ENCODE measurements at regions of chr15 and their contacts with region 1.

Region 1: GRCh38 chr15:31435261-31435911 is 108.8 kb downstream of the KLF13 start:
- DNase-seq: peak; percentile 92
- ATAC-seq: peak; percentile 73
- H3K4me3 Mint-ChIP-seq: peak overlapping the region; percentile 66
- H3K27ac Mint-ChIP-seq: peak overlapping the region; percentile 97
- H3K4me1 Mint-ChIP-seq: peaks cover 76% of the 10 kb centered on the region
- H3K27me3 Mint-ChIP-seq: no peaks in the 10 kb centered on the region

Region 2: GRCh38 chr15:29570931-29571791 is 1864.2 kb before region 1 on chr15:
- CTCF ChIA-PET with region 1: no interaction called
- POLR2A ChIA-PET with region 1: no interaction called
- intact Hi-C with region 1: no loop called
- DNase-seq: peak; percentile 54
- ATAC-seq: peak; percentile 26
- H3K4me3 Mint-ChIP-seq: peak overlapping the region; percentile 2
- H3K27ac Mint-ChIP-seq: no peak overlapping the region
- H3K4me1 Mint-ChIP-seq: peaks cover 7% of the 10 kb centered on the region
- H3K27me3 Mint-ChIP-seq: peaks cover 55% of the 10 kb centered on the region

Region 3: GRCh38 chr15:30903497-30904201 is 531.7 kb before region 1 on chr15 and contains the start of gene FAN1:
- CTCF ChIA-PET with region 1: no interaction called
- POLR2A ChIA-PET with region 1: no interaction called
- intact Hi-C with region 1: loop called in 1 of 2 experiments (anchors 1 kb)
- DNase-seq: peak; percentile 89
- ATAC-seq: peak; percentile 94
- H3K4me3 Mint-ChIP-seq: peak within 1 kb of the TSS; percentile 95
- H3K27ac Mint-ChIP-seq: peak within 1 kb of the TSS; percentile 89
- H3K4me1 Mint-ChIP-seq: peaks cover 23% of the 10 kb centered on the region
- H3K27me3 Mint-ChIP-seq: peaks cover 3% of the 10 kb centered on the region
- total RNA-seq, gene FAN1: 11.6 to 15.4 TPM

Region 4: GRCh38 chr15:31200735-31201151 is 234.6 kb before region 1 on chr15:
- CTCF ChIA-PET with region 1: interaction called, 5 read pairs
- POLR2A ChIA-PET with region 1: no interaction called
- intact Hi-C with region 1: loop called in 1 of 2 experiments (anchors 2 kb)
- DNase-seq: peak; percentile 83
- ATAC-seq: peak; percentile 76
- H3K4me3 Mint-ChIP-seq: no peak overlapping the region
- H3K27ac Mint-ChIP-seq: peak overlapping the region; percentile 55
- H3K4me1 Mint-ChIP-seq: peaks cover 18% of the 10 kb centered on the region
- H3K27me3 Mint-ChIP-seq: no peaks in the 10 kb centered on the region

Region 5: DNA sequence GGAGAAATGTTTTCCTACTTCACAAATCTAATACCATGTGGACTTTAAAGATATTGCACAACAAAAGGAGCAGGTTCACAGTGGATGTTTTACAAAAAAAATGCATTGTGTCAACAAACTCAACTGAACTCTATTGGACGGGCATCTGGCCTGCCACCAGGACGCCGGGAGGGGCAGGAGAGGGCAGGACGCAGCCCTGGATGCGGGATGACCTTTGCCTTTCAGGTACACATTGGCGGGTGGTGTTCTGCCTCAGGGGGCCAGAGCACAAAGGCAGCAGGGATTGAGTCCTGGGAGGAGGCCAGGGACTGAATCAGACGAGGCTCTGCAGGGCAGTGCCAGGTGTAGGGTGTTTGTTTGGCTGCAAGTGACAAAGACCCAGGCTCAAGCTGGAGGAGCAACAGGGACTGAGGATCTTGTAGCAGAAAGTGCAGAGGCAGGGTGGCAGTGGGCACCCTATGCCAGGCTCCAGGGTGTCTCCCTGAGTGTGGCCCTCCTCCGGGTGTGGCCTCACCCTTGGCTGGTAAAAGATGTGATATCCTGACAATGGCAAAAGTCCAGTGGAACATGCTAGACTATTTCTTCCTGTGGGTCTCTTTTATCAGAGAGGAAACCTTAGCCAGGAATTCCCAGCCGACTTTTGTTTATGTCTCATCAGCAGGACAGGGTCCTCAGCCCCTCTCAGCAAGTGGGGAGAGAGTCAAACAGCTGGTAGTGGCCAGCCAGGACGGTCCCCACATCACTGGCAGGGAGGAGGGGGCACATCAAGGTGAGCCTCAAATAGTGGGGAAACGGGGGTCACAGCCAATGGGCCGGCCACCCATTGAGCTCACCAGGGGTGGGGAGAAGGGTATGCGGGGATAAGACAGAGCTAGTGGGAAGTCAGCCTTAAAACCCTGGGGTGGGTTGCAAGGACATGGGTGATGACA is 138.5 kb before region 1 on chr15:
- CTCF ChIA-PET with region 1: no interaction called
- POLR2A ChIA-PET with region 1: no interaction called
- intact Hi-C with region 1: no loop called
- DNase-seq: no peak
- ATAC-seq: no peak
- H3K4me3 Mint-ChIP-seq: no peak overlapping the region
- H3K27ac Mint-ChIP-seq: no peak overlapping the region
- H3K4me1 Mint-ChIP-seq: no peaks in the 10 kb centered on the region
- H3K27me3 Mint-ChIP-seq: no peaks in the 10 kb centered on the region

Region 6: GRCh38 chr15:31326156-31326732 is 109.1 kb before region 1 on chr15:
- CTCF ChIA-PET with region 1: interaction called, 7 read pairs
- POLR2A ChIA-PET with region 1: interaction called, 6 read pairs
- intact Hi-C with region 1: loop called (anchors 1 to 2 kb)
- DNase-seq: peak; percentile 100
- ATAC-seq: peak; percentile 83
- H3K4me3 Mint-ChIP-seq: peak overlapping the region; percentile 85
- H3K27ac Mint-ChIP-seq: no peak overlapping the region
- H3K4me1 Mint-ChIP-seq: peaks cover 37% of the 10 kb centered on the region
- H3K27me3 Mint-ChIP-seq: no peaks in the 10 kb centered on the region

Region 7: GRCh38 chr15:31365655-31366127 is 69.7 kb before region 1 on chr15:
- CTCF ChIA-PET with region 1: interaction called, 22 read pairs
- POLR2A ChIA-PET with region 1: interaction called, 9 read pairs
- intact Hi-C with region 1: loop called (anchors 1 to 2 kb)
- DNase-seq: peak; percentile 92
- ATAC-seq: peak; percentile 68
- H3K4me3 Mint-ChIP-seq: peak overlapping the region; percentile 61
- H3K27ac Mint-ChIP-seq: peak overlapping the region; percentile 96
- H3K4me1 Mint-ChIP-seq: peaks cover 99% of the 10 kb centered on the region
- H3K27me3 Mint-ChIP-seq: no peaks in the 10 kb centered on the region

Region 8: GRCh38 chr15:31405200-31405920 is 30.0 kb before region 1 on chr15:
- CTCF ChIA-PET with region 1: interaction called, 4 read pairs
- POLR2A ChIA-PET with region 1: interaction called, 11 read pairs
- intact Hi-C with region 1: loop called in 1 of 2 experiments (anchors 2 kb)
- DNase-seq: peak; percentile 35
- ATAC-seq: peak; percentile 67
- H3K4me3 Mint-ChIP-seq: peak overlapping the region; percentile 63
- H3K27ac Mint-ChIP-seq: peak overlapping the region; percentile 93
- H3K4me1 Mint-ChIP-seq: peaks cover 24% of the 10 kb centered on the region
- H3K27me3 Mint-ChIP-seq: no peaks in the 10 kb centered on the region

Region 9: GRCh38 chr15:31472636-31473384 is 37.4 kb after region 1 on chr15:
- CTCF ChIA-PET with region 1: interaction called, 11 read pairs
- POLR2A ChIA-PET with region 1: interaction called, 11 read pairs
- intact Hi-C with region 1: loop called in 1 of 2 experiments (anchors 1 kb)
- DNase-seq: peak; percentile 74
- ATAC-seq: peak; percentile 93
- H3K4me3 Mint-ChIP-seq: peak overlapping the region; percentile 70
- H3K27ac Mint-ChIP-seq: peak overlapping the region; percentile 95
- H3K4me1 Mint-ChIP-seq: peaks cover 41% of the 10 kb centered on the region
- H3K27me3 Mint-ChIP-seq: no peaks in the 10 kb centered on the region